Mammary epithelial cell (primary cell): ENCODE measurements at regions of chr2 and their contacts with region 1.

Region 1: GRCh38 chr2:30464544-30465170 is 17.6 kb downstream of the LCLAT1 start:
- DNase-seq: no peak
- H3K4me3 ChIP-seq: no peak overlapping the region
- H3K27ac ChIP-seq: no peak overlapping the region
- H3K4me1 ChIP-seq: no peaks in the 10 kb centered on the region
- H3K27me3 ChIP-seq: no peaks in the 10 kb centered on the region
- CTCF ChIP-seq: no peak

Region 2: DNA sequence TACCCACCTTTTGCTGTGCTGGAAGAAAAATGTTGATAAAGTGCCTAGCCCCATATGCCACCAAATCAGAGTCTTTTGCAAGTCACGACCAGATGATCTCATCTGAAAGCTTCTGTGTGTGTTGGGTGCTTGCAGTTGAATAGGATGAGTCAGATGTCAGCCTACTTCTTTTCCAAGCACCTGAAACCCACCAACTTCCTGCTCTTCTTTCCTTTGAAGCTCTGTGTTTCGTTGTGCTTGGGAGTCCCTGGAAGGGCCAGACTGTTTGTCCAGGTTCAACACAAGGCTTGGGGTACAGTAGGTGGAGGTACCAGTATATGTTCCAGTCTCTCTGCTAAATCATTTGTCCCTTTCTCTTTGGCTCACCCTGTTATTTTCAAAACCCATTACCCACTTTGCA is 54.4 kb before region 1 on chr2:
- CTCF ChIA-PET with region 1: no interaction called
- dilution Hi-C with region 1: loop called (anchors 5 kb)
- in situ Hi-C with region 1: no loop called
- intact Hi-C with region 1: no loop called
- DNase-seq: peak; percentile 81
- H3K4me3 ChIP-seq: no peak overlapping the region
- H3K27ac ChIP-seq: no peak overlapping the region
- H3K4me1 ChIP-seq: peaks cover 11% of the 10 kb centered on the region
- H3K27me3 ChIP-seq: no peaks in the 10 kb centered on the region
- CTCF ChIP-seq: no peak

Region 3: GRCh38 chr2:30511122-30512083 is 46.7 kb after region 1 on chr2:
- CTCF ChIA-PET with region 1: no interaction called
- dilution Hi-C with region 1: no loop called
- in situ Hi-C with region 1: no loop called
- intact Hi-C with region 1: no loop called
- DNase-seq: no peak
- H3K4me3 ChIP-seq: no peak overlapping the region
- H3K27ac ChIP-seq: no peak overlapping the region
- H3K4me1 ChIP-seq: peaks cover 11% of the 10 kb centered on the region
- H3K27me3 ChIP-seq: no peaks in the 10 kb centered on the region
- CTCF ChIP-seq: no peak